Naive thymus-derived CD4-positive, alpha-beta T cell (primary cell): ENCODE measurements at regions of chr1 and their contacts with region 1.

Region 1: GRCh38 chr1:153922972-153923925 is at the start of gene GATAD2B:
- DNase-seq: peak; percentile 86 to 100 (median 99)
- ATAC-seq: peak; percentile 94
- H3K4me3 ChIP-seq: peak within 1 kb of the TSS; percentile 87
- H3K4me3 Mint-ChIP-seq: peak within 1 kb of the TSS; percentile 83 to 96 (median 94)
- H3K27ac ChIP-seq: peak within 1 kb of the TSS; percentile 97
- H3K27ac Mint-ChIP-seq: peak within 1 kb of the TSS; percentile 90 to 99 (median 97)
- H3K4me1 ChIP-seq: peaks cover 35% of the 10 kb centered on the region in 2 donors
- H3K4me1 Mint-ChIP-seq: peaks cover 31 to 53% (median 44%) of the 10 kb centered on the region in 7 donors
- H3K27me3 ChIP-seq: no peaks in the 10 kb centered on the region
- H3K27me3 Mint-ChIP-seq: peaks cover 0 to 3% (median 0%) of the 10 kb centered on the region in 5 donors
- total RNA-seq, gene GATAD2B: 67.3 to 102 (median 75.5) TPM

Region 2: DNA sequence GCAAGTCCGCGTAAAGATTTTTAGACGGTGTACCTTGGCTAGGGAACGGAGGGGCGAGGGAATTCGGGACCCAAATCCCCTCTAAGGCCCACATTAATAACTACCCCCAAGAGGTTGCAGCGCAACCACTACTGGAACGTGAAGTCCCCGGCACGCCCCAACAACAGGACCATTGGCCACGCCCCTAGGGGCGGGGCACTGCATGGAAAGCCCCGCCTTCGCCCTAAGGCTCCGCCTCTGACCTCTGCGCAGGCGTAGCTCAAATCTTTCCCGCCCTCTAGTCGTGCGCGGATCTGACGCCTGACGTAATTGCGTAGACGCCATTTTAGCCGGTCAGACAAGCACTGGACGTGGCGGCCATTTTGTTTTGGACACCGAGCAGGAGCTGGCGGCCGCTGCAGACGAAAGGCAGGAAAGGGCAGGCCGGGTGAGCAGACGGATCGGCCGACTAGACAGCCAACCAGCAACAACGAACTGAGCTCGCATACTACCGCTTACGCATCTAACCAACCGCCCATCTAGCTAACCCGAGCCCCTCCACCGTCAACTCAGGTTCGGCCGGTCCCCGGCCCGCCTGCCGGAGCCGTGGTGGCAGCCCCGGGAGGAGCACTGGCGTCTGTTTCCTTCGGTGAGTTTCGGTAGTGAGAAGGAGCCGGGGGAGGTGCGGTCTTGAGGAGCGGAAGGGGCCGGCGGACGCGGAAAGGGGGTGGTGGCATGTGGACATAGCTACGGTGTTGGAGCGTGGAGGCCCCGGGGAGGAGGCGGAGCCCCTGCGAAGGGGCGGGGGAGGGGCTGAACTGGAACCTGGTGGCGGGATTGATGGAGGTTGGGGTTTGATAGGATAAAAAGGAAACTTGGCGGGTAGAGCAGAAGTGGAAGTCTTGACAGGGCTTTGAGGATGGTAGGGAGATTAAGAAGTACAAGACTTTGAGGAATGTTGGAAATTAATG is 289.3 kb before region 1 on chr1 and contains the start of gene CHTOP:
- CTCF ChIA-PET with region 1: no interaction called
- POLR2A ChIA-PET with region 1: no interaction called
- intact Hi-C with region 1: loop called in 1 of 2 experiments (anchors 5 kb)
- DNase-seq: peak; percentile 96 to 99 (median 96)
- ATAC-seq: peak; percentile 95
- H3K4me3 ChIP-seq: peak within 1 kb of the TSS; percentile 99
- H3K4me3 Mint-ChIP-seq: peak within 1 kb of the TSS; percentile 97 to 100 (median 99)
- H3K27ac ChIP-seq: peak within 1 kb of the TSS; percentile 98
- H3K27ac Mint-ChIP-seq: peak within 1 kb of the TSS; percentile 98 to 100 (median 100)
- H3K4me1 ChIP-seq: peaks cover 11 to 25% of the 10 kb centered on the region in 2 donors
- H3K4me1 Mint-ChIP-seq: peaks cover 30 to 52% (median 41%) of the 10 kb centered on the region in 7 donors
- H3K27me3 ChIP-seq: no peaks in the 10 kb centered on the region
- H3K27me3 Mint-ChIP-seq: peaks cover 0 to 3% (median 0%) of the 10 kb centered on the region in 5 donors
- total RNA-seq, gene CHTOP: 85.2 to 143 (median 116) TPM

Region 3: GRCh38 chr1:153727463-153728304 is 195.6 kb before region 1 on chr1 and contains the start of gene INTS3:
- CTCF ChIA-PET with region 1: no interaction called
- POLR2A ChIA-PET with region 1: interaction called, 5 read pairs
- intact Hi-C with region 1: loop called in 1 of 2 experiments (anchors 2 kb)
- DNase-seq: peak; percentile 84 to 100 (median 99)
- ATAC-seq: peak; percentile 99
- H3K4me3 ChIP-seq: peak within 1 kb of the TSS; percentile 92
- H3K4me3 Mint-ChIP-seq: peak within 1 kb of the TSS; percentile 82 to 97 (median 92)
- H3K27ac ChIP-seq: peak within 1 kb of the TSS; percentile 94
- H3K27ac Mint-ChIP-seq: peak within 1 kb of the TSS; percentile 89 to 98 (median 95)
- H3K4me1 ChIP-seq: peaks cover 11 to 15% of the 10 kb centered on the region in 2 donors
- H3K4me1 Mint-ChIP-seq: peaks cover 7 to 35% (median 32%) of the 10 kb centered on the region in 7 donors
- H3K27me3 ChIP-seq: no peaks in the 10 kb centered on the region
- H3K27me3 Mint-ChIP-seq: peaks cover 0 to 2% (median 0%) of the 10 kb centered on the region in 5 donors
- total RNA-seq, gene INTS3: 43.6 to 68.1 (median 56.8) TPM

Region 4: GRCh38 chr1:153796791-153797659 is 126.2 kb before region 1 on chr1:
- CTCF ChIA-PET with region 1: interaction called, 4 read pairs
- POLR2A ChIA-PET with region 1: no interaction called
- intact Hi-C with region 1: loop called (anchors 1 kb)
- DNase-seq: peak; percentile 57 to 84 (median 78)
- ATAC-seq: peak; percentile 92
- H3K4me3 ChIP-seq: no peak overlapping the region
- H3K4me3 Mint-ChIP-seq: no peak overlapping the region
- H3K27ac ChIP-seq: no peak overlapping the region
- H3K27ac Mint-ChIP-seq: peak overlapping the region in 7 of 9 donors; percentile 39 to 84 (median 65)
- H3K4me1 ChIP-seq: peaks cover 0 to 6% of the 10 kb centered on the region in 2 donors
- H3K4me1 Mint-ChIP-seq: peaks cover 4 to 17% (median 8%) of the 10 kb centered on the region in 7 donors
- H3K27me3 ChIP-seq: no peaks in the 10 kb centered on the region
- H3K27me3 Mint-ChIP-seq: no peaks in the 10 kb centered on the region

Region 5: DNA sequence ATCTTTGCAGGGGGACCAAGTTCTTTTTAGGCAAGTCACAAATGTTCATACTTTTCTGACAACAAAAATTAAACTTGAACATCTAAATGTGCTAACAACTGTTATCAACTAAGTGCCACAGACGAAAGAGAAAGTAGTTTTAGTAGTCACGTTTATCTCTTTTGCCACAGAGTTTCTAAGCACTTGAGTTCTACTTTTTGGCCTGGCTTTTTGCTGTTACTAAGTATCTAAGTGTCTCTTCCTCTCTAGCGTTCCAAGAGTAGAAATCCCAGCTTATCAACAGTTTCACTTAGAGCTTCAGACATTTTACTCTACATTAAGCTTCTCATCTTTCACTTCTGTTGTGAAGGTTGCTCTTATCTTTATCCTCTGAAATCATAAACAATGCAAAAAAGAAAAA is 34.7 kb before region 1 on chr1:
- CTCF ChIA-PET with region 1: no interaction called
- POLR2A ChIA-PET with region 1: interaction called, 3 read pairs
- intact Hi-C with region 1: loop called in 1 of 2 experiments (anchors 5 kb)
- DNase-seq: no peak
- ATAC-seq: peak; percentile 27
- H3K4me3 ChIP-seq: no peak overlapping the region
- H3K4me3 Mint-ChIP-seq: peak overlapping the region; percentile 16 to 65 (median 48)
- H3K27ac ChIP-seq: peak overlapping the region; percentile 38
- H3K27ac Mint-ChIP-seq: peak overlapping the region; percentile 28 to 79 (median 61)
- H3K4me1 ChIP-seq: peaks cover 0 to 4% of the 10 kb centered on the region in 2 donors
- H3K4me1 Mint-ChIP-seq: peaks cover 28 to 64% (median 54%) of the 10 kb centered on the region in 7 donors
- H3K27me3 ChIP-seq: no peaks in the 10 kb centered on the region
- H3K27me3 Mint-ChIP-seq: no peaks in the 10 kb centered on the region

Region 6: GRCh38 chr1:153946622-153947241 is 23.5 kb after region 1 on chr1 and contains the start of gene DENND4B:
- CTCF ChIA-PET with region 1: interaction called, 5 read pairs
- POLR2A ChIA-PET with region 1: interaction called, 122 read pairs
- intact Hi-C with region 1: loop called (anchors 1 kb)
- DNase-seq: peak; percentile 55 to 85 (median 68)
- ATAC-seq: peak; percentile 75
- H3K4me3 ChIP-seq: peak within 1 kb of the TSS; percentile 94
- H3K4me3 Mint-ChIP-seq: peak within 1 kb of the TSS; percentile 93 to 99 (median 96)
- H3K27ac ChIP-seq: peak within 1 kb of the TSS; percentile 89
- H3K27ac Mint-ChIP-seq: peak within 1 kb of the TSS; percentile 90 to 98 (median 96)
- H3K4me1 ChIP-seq: peaks cover 23 to 25% of the 10 kb centered on the region in 2 donors
- H3K4me1 Mint-ChIP-seq: peaks cover 20 to 44% (median 39%) of the 10 kb centered on the region in 7 donors
- H3K27me3 ChIP-seq: no peaks in the 10 kb centered on the region
- H3K27me3 Mint-ChIP-seq: no peaks in the 10 kb centered on the region
- total RNA-seq, gene DENND4B: 148 to 223 (median 197) TPM

Region 7: GRCh38 chr1:153967082-153968000 is 44.1 kb after region 1 on chr1 and contains the start of gene CREB3L4:
- CTCF ChIA-PET with region 1: interaction called, 3 read pairs
- POLR2A ChIA-PET with region 1: interaction called, 34 read pairs
- intact Hi-C with region 1: loop called (anchors 1 kb)
- DNase-seq: peak; percentile 68 to 89 (median 84)
- ATAC-seq: peak; percentile 91
- H3K4me3 ChIP-seq: peak within 1 kb of the TSS; percentile 89
- H3K4me3 Mint-ChIP-seq: peak within 1 kb of the TSS; percentile 83 to 97 (median 92)
- H3K27ac ChIP-seq: peak within 1 kb of the TSS; percentile 79
- H3K27ac Mint-ChIP-seq: peak within 1 kb of the TSS; percentile 87 to 99 (median 94)
- H3K4me1 ChIP-seq: peaks cover 32 to 40% of the 10 kb centered on the region in 2 donors
- H3K4me1 Mint-ChIP-seq: peaks cover 27 to 72% (median 57%) of the 10 kb centered on the region in 7 donors
- H3K27me3 ChIP-seq: no peaks in the 10 kb centered on the region
- H3K27me3 Mint-ChIP-seq: no peaks in the 10 kb centered on the region
- total RNA-seq, gene CREB3L4: 4.6 to 8.4 (median 7.0) TPM

Region 8: GRCh38 chr1:154104433-154105082 is 181.3 kb after region 1 on chr1:
- CTCF ChIA-PET with region 1: no interaction called
- POLR2A ChIA-PET with region 1: no interaction called
- intact Hi-C with region 1: no loop called
- DNase-seq: no peak
- ATAC-seq: no peak
- H3K4me3 ChIP-seq: no peak overlapping the region
- H3K4me3 Mint-ChIP-seq: no peak overlapping the region
- H3K27ac ChIP-seq: no peak overlapping the region
- H3K27ac Mint-ChIP-seq: no peak overlapping the region
- H3K4me1 ChIP-seq: no peaks in the 10 kb centered on the region
- H3K4me1 Mint-ChIP-seq: peaks cover 0 to 4% (median 0%) of the 10 kb centered on the region in 7 donors
- H3K27me3 ChIP-seq: no peaks in the 10 kb centered on the region
- H3K27me3 Mint-ChIP-seq: peaks cover 0 to 2% (median 0%) of the 10 kb centered on the region in 5 donors